PC-3 (cell line): ENCODE measurements at regions of chr3 and their contacts with region 1.

Region 1: GRCh38 chr3:44883999-44884431 is 9.6 kb downstream of the TGM4 start:
- DNase-seq: peak; percentile 99
- ATAC-seq: peak; percentile 67
- H3K4me3 ChIP-seq: peak overlapping the region; percentile 2; the same call in 1 of the 2 replicates
- H3K27ac ChIP-seq: peak overlapping the region; percentile 97
- H3K4me1 ChIP-seq: peaks cover 49% of the 10 kb centered on the region
- H3K27me3 ChIP-seq: no peaks in the 10 kb centered on the region
- CTCF ChIP-seq: no peak

Region 2: GRCh38 chr3:44045476-44046275 is 838.3 kb before region 1 on chr3:
- CTCF ChIA-PET with region 1: no interaction called
- POLR2A ChIA-PET with region 1: no interaction called
- intact Hi-C with region 1: no loop called
- DNase-seq: peak; percentile 12
- ATAC-seq: no peak
- H3K4me3 ChIP-seq: no peak overlapping the region
- H3K27ac ChIP-seq: no peak overlapping the region
- H3K4me1 ChIP-seq: peaks cover 11% of the 10 kb centered on the region; the same call in 1 of the 2 replicates
- H3K27me3 ChIP-seq: no peaks in the 10 kb centered on the region
- CTCF ChIP-seq: no peak

Region 3: GRCh38 chr3:44584646-44585501 is 299.1 kb before region 1 on chr3 and contains the start of gene ZNF660:
- CTCF ChIA-PET with region 1: no interaction called
- POLR2A ChIA-PET with region 1: no interaction called
- intact Hi-C with region 1: no loop called
- DNase-seq: peak; percentile 26
- ATAC-seq: no peak
- H3K4me3 ChIP-seq: no peak within 1 kb of the TSS
- H3K27ac ChIP-seq: no peak within 1 kb of the TSS
- H3K4me1 ChIP-seq: no peaks in the 10 kb centered on the region; the same call in 1 of the 2 replicates
- H3K27me3 ChIP-seq: no peaks in the 10 kb centered on the region
- CTCF ChIP-seq: no peak
- total RNA-seq, gene ZNF660: not detected in 2 replicates

Region 4: DNA sequence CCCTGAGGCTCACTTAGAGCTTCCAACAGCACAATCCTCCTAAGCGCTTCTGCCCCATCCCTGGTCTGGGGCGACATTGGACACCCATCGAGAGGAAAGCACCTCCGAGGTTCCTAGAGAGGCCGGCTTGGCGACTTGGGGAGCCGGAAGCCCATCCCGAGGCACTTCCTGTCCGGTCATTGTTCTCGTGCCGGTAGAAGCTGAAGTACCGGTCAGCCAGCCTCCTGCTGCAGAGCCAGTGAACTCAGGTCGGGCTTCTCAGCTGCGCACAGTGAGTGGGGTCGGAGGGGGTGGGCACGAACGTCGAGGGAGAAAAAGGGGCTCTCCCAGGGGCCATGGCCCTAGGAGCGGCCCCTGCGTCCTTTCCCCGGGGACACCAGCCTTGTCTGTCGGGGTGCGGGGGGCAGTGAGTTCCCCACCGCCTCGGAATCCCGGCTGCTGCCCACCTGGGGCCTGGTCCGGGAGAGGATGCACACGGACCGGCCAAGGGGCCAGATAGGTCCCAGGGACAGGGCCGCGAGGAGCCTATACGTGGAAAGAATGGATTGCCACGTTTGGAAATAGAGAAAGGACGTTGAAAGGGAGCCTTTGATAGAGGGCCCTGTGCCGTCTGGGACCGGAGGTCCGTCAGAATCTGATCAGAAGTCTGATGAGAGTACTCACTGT is 235.3 kb before region 1 on chr3 and contains the start of gene ZNF35:
- CTCF ChIA-PET with region 1: no interaction called
- POLR2A ChIA-PET with region 1: no interaction called
- intact Hi-C with region 1: loop called (anchors 10 kb)
- DNase-seq: peak; percentile 92
- ATAC-seq: peak; percentile 98
- H3K4me3 ChIP-seq: peak within 1 kb of the TSS; percentile 74
- H3K27ac ChIP-seq: no peak within 1 kb of the TSS
- H3K4me1 ChIP-seq: peaks cover 3% of the 10 kb centered on the region; the same call in 1 of the 2 replicates
- H3K27me3 ChIP-seq: no peaks in the 10 kb centered on the region
- CTCF ChIP-seq: no peak
- total RNA-seq, gene ZNF35: 12.0 and 12.4 TPM in 2 replicates

Region 5: DNA sequence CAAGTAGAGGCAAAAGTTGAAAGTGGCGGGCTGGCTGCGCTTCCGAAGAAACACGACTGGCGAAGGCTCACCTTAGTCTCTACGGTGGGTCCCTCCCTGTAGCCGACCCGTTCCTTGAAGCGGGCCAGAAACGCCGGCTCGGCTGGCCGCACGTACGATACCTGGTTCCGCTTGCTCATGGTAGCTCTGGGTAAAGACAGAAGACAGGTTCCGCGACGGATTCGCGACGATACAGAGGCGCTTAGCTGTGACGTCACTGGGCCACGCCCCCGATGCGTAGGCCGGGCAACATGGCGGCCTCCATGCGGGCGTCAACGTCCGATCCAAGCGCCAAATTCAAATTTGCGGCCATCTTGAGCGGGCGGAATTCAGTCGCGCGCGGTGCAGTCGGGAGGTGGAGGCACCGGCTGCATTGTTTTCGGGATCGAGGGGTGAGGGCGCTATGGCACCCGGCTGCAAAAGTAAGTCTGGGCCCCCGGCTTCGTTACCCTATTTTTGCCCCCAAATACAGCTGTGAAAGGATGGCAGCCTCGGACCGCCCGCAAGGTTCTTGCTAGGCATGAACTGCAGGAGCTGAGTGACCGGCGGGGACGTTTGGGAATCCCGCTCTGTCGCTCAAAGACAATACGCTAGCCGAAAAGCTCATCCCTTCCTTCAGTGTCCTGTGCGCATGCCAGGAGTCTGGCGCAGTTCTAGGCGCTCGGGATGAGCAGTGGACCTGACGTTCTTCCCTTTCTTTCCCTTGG is 122.4 kb before region 1 on chr3 and contains the starts of genes KIAA1143 and KIF15:
- CTCF ChIA-PET with region 1: no interaction called
- POLR2A ChIA-PET with region 1: no interaction called
- intact Hi-C with region 1: loop called (anchors 5 kb)
- DNase-seq: peak; percentile 98
- ATAC-seq: peak; percentile 90
- H3K4me3 ChIP-seq: peak within 1 kb of the TSS; percentile 76
- H3K27ac ChIP-seq: peak within 1 kb of the TSS; percentile 55
- H3K4me1 ChIP-seq: peaks cover 7% of the 10 kb centered on the region
- H3K27me3 ChIP-seq: no peaks in the 10 kb centered on the region
- CTCF ChIP-seq: peak; percentile 30; the same call in 1 of the 2 replicates
- total RNA-seq, gene KIAA1143: 16.5 and 20.4 TPM in 2 replicates
- total RNA-seq, gene KIF15: 19.1 and 31.8 TPM in 2 replicates

Region 6: DNA sequence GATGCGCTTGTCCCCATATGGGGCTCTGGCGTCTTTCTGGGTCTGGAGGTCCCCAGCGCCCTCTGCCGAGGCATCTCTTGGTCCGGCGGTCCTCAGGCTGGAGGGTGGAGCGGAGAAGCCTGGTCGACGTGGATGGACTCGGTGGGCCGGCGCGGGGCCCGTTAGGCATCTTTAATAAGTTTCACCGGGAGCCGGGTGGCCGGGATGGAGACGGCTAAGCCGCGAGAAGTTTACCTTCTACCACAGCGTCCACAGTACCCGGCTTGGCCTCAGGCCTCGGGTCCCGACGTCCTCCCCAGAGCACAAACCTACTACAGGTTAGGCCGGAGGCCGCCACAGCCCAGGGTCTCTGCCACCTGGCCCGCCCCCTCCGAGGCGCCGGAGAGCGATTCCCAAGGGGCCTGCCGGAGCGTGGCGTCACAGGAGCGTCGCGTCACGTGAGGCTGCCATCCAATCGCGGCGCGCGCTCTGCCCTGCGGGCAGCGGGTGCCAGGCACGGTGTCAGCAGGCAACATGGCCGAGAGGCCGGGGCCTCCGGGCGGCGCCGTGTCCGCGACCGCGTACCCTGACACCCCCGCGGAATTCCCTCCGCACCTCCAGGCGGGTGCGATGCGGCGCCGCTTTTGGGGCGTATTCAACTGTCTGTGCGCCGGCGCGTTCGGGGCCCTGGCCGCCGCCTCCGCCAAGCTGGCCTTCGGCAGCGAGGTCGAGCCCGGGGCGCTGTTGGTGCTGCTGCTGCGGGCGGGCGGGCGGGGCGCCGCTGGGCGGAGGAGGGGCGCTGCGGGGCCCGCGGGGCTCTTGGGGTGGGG is 22.4 kb before region 1 on chr3 and contains the start of gene TMEM42:
- CTCF ChIA-PET with region 1: interaction called, 12 read pairs
- POLR2A ChIA-PET with region 1: interaction called, 7 read pairs
- intact Hi-C with region 1: no loop called
- DNase-seq: peak; percentile 59
- ATAC-seq: peak; percentile 92
- H3K4me3 ChIP-seq: peak within 1 kb of the TSS; percentile 61
- H3K27ac ChIP-seq: peak within 1 kb of the TSS; percentile 13; the same call in 1 of the 2 replicates
- H3K4me1 ChIP-seq: peaks cover 5% of the 10 kb centered on the region; the same call in 1 of the 2 replicates
- H3K27me3 ChIP-seq: no peaks in the 10 kb centered on the region
- CTCF ChIP-seq: no peak
- total RNA-seq, gene TMEM42: 6.3 and 10.2 TPM in 2 replicates

Region 7: DNA sequence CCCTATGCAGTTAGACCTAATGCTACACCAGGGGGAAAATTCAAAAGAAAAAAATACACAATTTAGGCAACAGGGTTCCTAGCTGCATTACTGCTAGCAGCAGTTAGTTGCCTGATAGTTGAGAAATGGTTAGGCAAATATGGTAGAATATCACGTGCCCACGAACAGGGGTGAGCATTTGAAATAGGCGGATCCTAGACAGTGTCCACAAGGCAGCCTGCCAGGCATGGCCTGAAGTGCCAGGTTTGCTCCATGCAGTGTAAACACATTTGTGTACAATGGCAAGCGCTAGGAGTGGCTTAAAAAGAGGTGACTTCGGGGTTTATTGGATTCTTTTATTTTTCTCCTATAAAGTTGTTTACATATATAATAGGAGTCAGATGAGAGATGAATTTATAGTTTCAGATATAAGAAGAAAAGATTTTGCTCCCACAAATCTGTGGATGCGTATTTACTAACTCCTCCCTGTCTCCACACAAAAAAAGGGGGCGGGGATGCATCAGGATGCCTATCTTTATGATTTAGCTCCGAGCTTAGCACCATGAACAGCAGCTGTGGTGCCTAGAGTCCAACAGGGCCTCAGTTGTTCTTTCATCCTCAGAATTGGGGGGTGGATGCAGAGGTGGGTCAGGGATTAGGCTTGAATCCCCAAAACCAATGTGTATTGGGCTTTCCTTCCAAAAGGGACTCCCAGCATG is 13.5 kb before region 1 on chr3:
- CTCF ChIA-PET with region 1: no interaction called
- POLR2A ChIA-PET with region 1: interaction called, 7 read pairs
- intact Hi-C with region 1: loop called (anchors 1 kb)
- DNase-seq: peak; percentile 72
- ATAC-seq: peak; percentile 99
- H3K4me3 ChIP-seq: no peak overlapping the region
- H3K27ac ChIP-seq: 0 out of 2 replicates have a peak overlapping the region, but pooled peaks have one; percentile 19
- H3K4me1 ChIP-seq: peaks cover 15% of the 10 kb centered on the region
- H3K27me3 ChIP-seq: no peaks in the 10 kb centered on the region
- CTCF ChIP-seq: no peak

Region 8: DNA sequence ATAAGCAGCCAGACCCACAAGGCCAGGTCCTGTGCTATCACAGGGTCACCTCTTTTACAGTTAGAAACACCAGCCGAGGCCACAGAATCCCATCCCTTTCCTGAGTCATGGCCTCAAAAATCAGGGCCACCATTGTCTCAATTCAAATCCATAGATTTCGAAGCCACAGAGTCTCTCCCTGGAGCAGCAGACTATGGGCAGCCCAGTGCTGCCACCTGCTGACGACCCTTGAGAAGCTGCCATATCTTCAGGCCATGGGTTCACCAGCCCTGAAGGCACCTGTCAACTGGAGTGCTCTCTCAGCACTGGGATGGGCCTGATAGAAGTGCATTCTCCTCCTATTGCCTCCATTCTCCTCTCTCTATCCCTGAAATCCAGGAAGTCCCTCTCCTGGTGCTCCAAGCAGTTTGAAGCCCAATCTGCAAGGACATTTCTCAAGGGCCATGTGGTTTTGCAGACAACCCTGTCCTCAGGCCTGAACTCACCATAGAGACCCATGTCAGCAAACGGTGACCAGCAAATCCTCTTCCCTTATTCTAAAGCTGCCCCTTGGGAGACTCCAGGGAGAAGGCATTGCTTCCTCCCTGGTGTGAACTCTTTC is 30.0 kb after region 1 on chr3:
- CTCF ChIA-PET with region 1: interaction called, 4 read pairs
- POLR2A ChIA-PET with region 1: no interaction called
- intact Hi-C with region 1: loop called (anchors 1 kb)
- DNase-seq: peak; percentile 87
- ATAC-seq: peak; percentile 72
- H3K4me3 ChIP-seq: no peak overlapping the region
- H3K27ac ChIP-seq: no peak overlapping the region
- H3K4me1 ChIP-seq: no peaks in the 10 kb centered on the region
- H3K27me3 ChIP-seq: no peaks in the 10 kb centered on the region
- CTCF ChIP-seq: peak; percentile 93

Region 9: DNA sequence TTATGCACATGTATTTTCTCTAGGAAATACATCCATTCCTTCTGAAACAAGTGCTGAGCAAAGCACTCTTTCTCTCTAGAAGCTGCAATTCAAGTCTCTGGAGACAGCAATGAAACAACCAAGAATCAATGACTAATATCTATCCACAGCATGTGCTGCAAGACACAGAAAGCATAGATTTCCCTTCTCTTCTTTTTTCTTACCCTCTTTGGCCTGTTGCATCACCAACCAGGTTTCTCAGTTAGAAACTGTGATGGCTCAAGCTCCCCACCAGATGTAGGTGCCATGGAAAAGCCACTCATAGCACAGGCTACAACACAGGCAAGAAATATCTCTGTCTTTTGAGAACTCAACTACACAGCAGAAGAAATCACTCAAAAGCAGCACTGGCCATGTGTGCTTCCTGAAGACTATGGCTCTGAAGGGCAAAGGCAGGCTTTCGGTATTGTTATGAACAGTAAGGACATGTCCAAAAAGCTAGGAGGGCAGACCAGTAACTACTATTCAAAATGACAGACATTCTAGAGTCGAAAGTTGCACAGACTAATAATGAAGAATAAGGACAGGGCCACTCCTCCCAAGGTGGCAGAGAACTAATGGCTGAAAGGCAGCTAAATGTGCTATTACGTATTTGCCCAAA is 76.5 kb after region 1 on chr3:
- CTCF ChIA-PET with region 1: no interaction called
- POLR2A ChIA-PET with region 1: no interaction called
- intact Hi-C with region 1: loop called (anchors 5 kb)
- DNase-seq: no peak
- ATAC-seq: no peak
- H3K4me3 ChIP-seq: no peak overlapping the region
- H3K27ac ChIP-seq: no peak overlapping the region
- H3K4me1 ChIP-seq: peaks cover 65% of the 10 kb centered on the region
- H3K27me3 ChIP-seq: no peaks in the 10 kb centered on the region
- CTCF ChIP-seq: no peak